A549 (cell line): ENCODE measurements at regions of chr11 and their contacts with region 1.

Region 1: GRCh38 chr11:123694551-123694950 is 40.1 kb upstream of the SCN3B start:
- DNase-seq: no peak
- ATAC-seq: no peak
- H3K4me3 ChIP-seq: no peak overlapping the region
- H3K27ac ChIP-seq: no peak overlapping the region
- H3K4me1 ChIP-seq: no peaks in the 10 kb centered on the region
- CTCF ChIP-seq: no peak
- EP300 ChIP-seq: no peak
- POLR2A ChIP-seq: no peak
- RAD21 ChIP-seq: no peak

Region 2: GRCh38 chr11:123549926-123550917 is 144.3 kb before region 1 on chr11:
- CTCF ChIA-PET with region 1: no interaction called
- POLR2A ChIA-PET with region 1: interaction called, 11 read pairs
- DNase-seq: no peak
- ATAC-seq: no peak
- H3K4me3 ChIP-seq: no peak overlapping the region
- H3K27ac ChIP-seq: no peak overlapping the region
- H3K4me1 ChIP-seq: peaks cover 35% of the 10 kb centered on the region
- CTCF ChIP-seq: no peak
- EP300 ChIP-seq: no peak
- POLR2A ChIP-seq: no peak
- RAD21 ChIP-seq: no peak

Region 3: GRCh38 chr11:123719452-123719851 is 24.9 kb after region 1 on chr11:
- CTCF ChIA-PET with region 1: no interaction called
- POLR2A ChIA-PET with region 1: no interaction called
- DNase-seq: no peak
- ATAC-seq: peak in 1 of 2 experiments; percentile 71; a peak in 1 of 6 replicates
- H3K4me3 ChIP-seq: no peak overlapping the region
- H3K27ac ChIP-seq: no peak overlapping the region
- H3K4me1 ChIP-seq: no peaks in the 10 kb centered on the region
- CTCF ChIP-seq: no peak
- EP300 ChIP-seq: no peak
- POLR2A ChIP-seq: no peak
- RAD21 ChIP-seq: no peak